Adrenal gland (tissue), 19 donors: ENCODE measurements at regions of chr11 and their contacts with region 1.

Region 1: DNA sequence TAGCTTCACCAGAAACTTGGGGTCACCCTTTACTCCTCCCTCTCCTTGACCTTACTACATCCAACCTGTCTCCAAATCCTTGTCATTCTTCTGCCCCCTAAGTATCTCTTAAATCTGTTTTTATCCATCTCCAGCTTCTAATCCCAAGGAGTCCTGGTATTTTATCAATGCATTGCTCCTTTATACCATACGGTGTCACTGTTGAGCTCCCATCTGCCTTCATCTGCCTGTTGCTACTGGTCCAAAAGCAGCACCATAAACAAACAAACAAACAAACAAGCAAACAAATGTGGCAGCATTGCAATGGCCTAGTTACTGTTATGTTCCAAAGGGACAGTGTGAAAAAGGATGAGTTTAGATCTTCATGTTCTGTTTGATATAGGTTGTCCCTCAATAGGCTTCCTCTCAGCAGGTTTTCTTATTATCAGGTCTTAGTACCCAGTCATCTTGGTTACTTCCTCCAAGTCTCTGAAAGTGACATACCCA is 34.2 kb downstream of the DNHD1 start:
- DNase-seq: peak in 5 of 7 donors; percentile 27 to 61 (median 35)
- H3K4me3 ChIP-seq: no peak overlapping the region
- H3K27ac ChIP-seq: no peak overlapping the region
- H3K4me1 ChIP-seq: no peaks in the 10 kb centered on the region
- H3K27me3 ChIP-seq: no peaks in the 10 kb centered on the region
- CTCF ChIP-seq: peak; percentile 54 to 95 (median 78)
- POLR2A ChIP-seq: no peak

Region 2: DNA sequence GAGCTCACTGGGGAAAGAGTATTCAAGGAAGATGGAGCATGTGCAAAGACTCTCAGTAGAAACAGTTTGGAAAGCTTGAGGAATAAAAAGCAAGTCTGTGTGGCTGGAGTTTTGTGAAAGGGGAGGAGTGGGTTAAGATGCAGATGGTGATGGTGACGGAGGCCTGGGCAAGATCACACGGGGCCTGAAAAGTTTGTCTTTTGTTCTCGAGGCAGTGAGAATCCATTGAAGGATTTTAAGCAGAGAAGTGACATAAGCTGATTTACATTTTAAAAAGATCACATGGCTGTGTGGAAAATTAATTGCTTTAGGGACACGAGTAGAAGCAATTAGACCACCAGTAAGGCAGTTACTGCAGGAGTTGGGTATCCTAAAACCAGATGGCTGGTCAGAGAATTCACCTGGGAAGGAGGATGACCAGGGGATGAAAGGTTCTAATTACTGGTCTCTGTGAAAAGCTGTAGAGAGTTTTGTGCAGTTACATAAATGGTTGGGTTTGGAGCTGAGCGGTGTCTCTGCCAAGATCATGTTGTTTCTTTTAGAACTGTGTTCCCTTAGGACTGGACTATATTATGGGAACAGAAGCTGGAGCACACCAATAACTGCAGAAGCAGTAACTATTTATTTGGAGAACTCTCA is 65.0 kb after region 1 on chr11:
- intact Hi-C with region 1: loop called (anchors 10 kb)
- DNase-seq: no peak
- H3K4me3 ChIP-seq: no peak overlapping the region
- H3K27ac ChIP-seq: no peak overlapping the region
- H3K4me1 ChIP-seq: peaks cover 0 to 8% of the 10 kb centered on the region in 2 donors
- H3K27me3 ChIP-seq: no peaks in the 10 kb centered on the region
- CTCF ChIP-seq: no peak
- POLR2A ChIP-seq: no peak

Region 3: GRCh38 chr11:6603287-6604080 is 72.2 kb after region 1 on chr11 and contains the starts of genes ILK and RRP8:
- intact Hi-C with region 1: loop called (anchors 10 kb)
- DNase-seq: peak; percentile 90 to 95 (median 93)
- H3K4me3 ChIP-seq: peak within 1 kb of the TSS; percentile 48 to 95 (median 88)
- H3K27ac ChIP-seq: peak within 1 kb of the TSS; percentile 34 to 98 (median 90)
- H3K4me1 ChIP-seq: peaks cover 34 to 55% of the 10 kb centered on the region in 2 donors
- H3K27me3 ChIP-seq: no peaks in the 10 kb centered on the region
- CTCF ChIP-seq: peak in 5 of 6 experiments; percentile 8 to 37 (median 18)
- POLR2A ChIP-seq: peak; percentile 69 to 78
- total RNA-seq, gene ILK: 99.1 to 191 (median 153) TPM
- total RNA-seq, gene RRP8: 9.4 to 27.5 (median 20.0) TPM

Region 4: GRCh38 chr11:6682936-6683861 is 151.9 kb after region 1 on chr11 and contains the start of gene MRPL17:
- intact Hi-C with region 1: loop called in 1 of 2 experiments (anchors 10 kb)
- DNase-seq: peak; percentile 99 to 100 (median 99)
- H3K4me3 ChIP-seq: peak within 1 kb of the TSS; percentile 52 to 91 (median 63)
- H3K27ac ChIP-seq: peak within 1 kb of the TSS; percentile 62 to 93 (median 92)
- H3K4me1 ChIP-seq: peaks cover 6 to 15% of the 10 kb centered on the region in 2 donors
- H3K27me3 ChIP-seq: no peaks in the 10 kb centered on the region
- CTCF ChIP-seq: peak; percentile 87 to 97 (median 92)
- POLR2A ChIP-seq: peak; percentile 46 to 86
- total RNA-seq, gene MRPL17: 51.2 to 532 (median 79.8) TPM

Region 5: DNA sequence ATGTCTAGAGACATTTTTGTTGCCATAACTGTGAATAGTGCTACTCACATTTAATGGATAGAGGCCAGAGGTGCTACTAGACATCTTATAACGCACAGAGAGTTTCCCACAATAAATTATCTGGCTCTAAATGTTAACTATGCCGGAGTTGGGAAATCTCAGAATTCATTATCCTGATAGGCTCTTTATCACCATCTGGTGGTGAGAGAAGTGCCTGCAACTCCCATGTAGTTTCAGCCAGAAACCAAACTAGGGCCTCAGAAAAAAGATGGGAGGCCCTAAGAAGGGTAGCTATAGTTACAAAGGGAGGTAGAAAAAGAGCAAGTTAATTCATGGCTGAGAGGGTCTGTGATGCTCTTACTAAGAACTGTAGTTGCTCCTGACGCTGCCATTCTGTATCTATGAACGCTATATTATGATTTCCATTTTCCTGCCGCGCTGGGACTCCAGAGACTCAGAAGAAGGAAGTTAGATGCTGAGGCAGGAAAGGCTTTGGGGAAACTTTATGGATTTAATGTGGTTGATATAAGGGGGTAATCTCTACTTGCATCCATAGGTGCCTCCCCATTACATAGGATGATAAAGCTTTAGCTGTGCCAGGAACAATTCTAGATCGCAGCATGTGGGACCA is 174.7 kb after region 1 on chr11:
- intact Hi-C with region 1: loop called (anchors 5 to 10 kb)
- DNase-seq: peak; percentile 48 to 83 (median 60)
- H3K4me3 ChIP-seq: no peak overlapping the region
- H3K27ac ChIP-seq: no peak overlapping the region
- H3K4me1 ChIP-seq: peaks cover 0 to 8% of the 10 kb centered on the region in 2 donors
- H3K27me3 ChIP-seq: no peaks in the 10 kb centered on the region
- CTCF ChIP-seq: peak; percentile 83 to 98 (median 86)
- POLR2A ChIP-seq: no peak

Region 6: GRCh38 chr11:6882747-6883146 is 351.4 kb after region 1 on chr11:
- intact Hi-C with region 1: no loop called
- DNase-seq: no peak
- H3K4me3 ChIP-seq: no peak overlapping the region
- H3K27ac ChIP-seq: no peak overlapping the region
- H3K4me1 ChIP-seq: no peaks in the 10 kb centered on the region
- H3K27me3 ChIP-seq: no peaks in the 10 kb centered on the region
- CTCF ChIP-seq: no peak
- POLR2A ChIP-seq: no peak